Common myeloid progenitor, CD34-positive (primary cell): ENCODE measurements at regions of chr14 and their contacts with region 1.

Region 1: GRCh38 chr14:96309896-96310330 is 53.2 kb downstream of the ATG2B start:
- DNase-seq: peak; percentile 5 to 17 (median 9)
- H3K4me3 ChIP-seq: no peak overlapping the region
- H3K27ac ChIP-seq: no peak overlapping the region
- H3K4me1 ChIP-seq: no peaks in the 10 kb centered on the region
- H3K27me3 ChIP-seq: no peaks in the 10 kb centered on the region

Region 2: DNA sequence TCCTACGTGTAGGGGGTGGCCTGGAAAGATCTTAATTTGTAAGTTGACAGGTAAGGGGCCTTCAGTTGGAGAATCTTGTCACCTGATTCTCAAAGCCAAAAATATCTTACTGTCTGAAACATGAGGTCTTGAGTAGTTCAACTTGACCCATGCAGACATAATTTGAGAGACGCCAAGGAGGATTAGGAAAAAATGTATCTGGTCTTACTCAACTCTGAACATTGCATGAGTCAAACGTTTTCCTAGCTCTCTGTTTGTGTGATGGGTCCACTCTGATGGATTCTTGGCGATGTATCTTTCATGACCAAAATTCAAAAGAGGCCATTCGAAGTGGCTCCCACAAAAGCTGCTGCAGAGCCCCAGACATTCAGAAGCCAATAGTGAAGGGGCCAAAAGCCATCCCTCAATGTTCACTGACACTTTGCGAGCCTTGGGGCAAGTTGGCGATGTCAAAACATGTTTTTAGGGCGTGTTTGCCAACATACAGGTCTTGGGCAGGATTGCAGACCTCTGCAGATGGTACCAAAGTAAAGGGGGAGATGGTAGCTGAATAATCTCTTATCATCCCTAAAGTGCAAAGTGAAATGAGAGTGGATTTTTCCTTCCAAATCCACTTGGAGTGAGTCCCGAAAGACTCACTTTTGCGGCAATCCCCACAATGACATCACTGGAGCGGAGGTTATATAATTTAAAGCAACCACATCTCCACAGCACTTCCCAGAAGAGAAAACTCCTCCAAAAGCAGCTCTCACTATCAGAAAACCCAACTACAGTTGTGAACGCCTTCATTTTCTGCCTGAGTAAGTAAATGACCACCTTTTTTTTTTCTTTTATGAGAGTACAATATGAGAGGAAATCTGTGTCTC is 54.2 kb before region 1 on chr14 and contains the start of gene BDKRB1:
- CTCF ChIA-PET with region 1: no interaction called
- POLR2A ChIA-PET with region 1: no interaction called
- DNase-seq: no peak
- H3K4me3 ChIP-seq: no peak within 1 kb of the TSS
- H3K27ac ChIP-seq: no peak within 1 kb of the TSS
- H3K4me1 ChIP-seq: no peaks in the 10 kb centered on the region
- H3K27me3 ChIP-seq: peaks cover 0 to 41% (median 16%) of the 10 kb centered on the region in 5 experiments

Region 3: GRCh38 chr14:96267336-96268315 is 42.3 kb before region 1 on chr14:
- CTCF ChIA-PET with region 1: no interaction called
- POLR2A ChIA-PET with region 1: no interaction called
- DNase-seq: peak in 2 of 3 donors; percentile 15 to 17
- H3K4me3 ChIP-seq: no peak overlapping the region
- H3K27ac ChIP-seq: no peak overlapping the region
- H3K4me1 ChIP-seq: no peaks in the 10 kb centered on the region
- H3K27me3 ChIP-seq: peaks cover 0 to 3% (median 0%) of the 10 kb centered on the region in 5 experiments

Region 4: GRCh38 chr14:96297000-96297399 is 12.9 kb before region 1 on chr14:
- CTCF ChIA-PET with region 1: interaction called, 25 read pairs
- POLR2A ChIA-PET with region 1: interaction called, 3 read pairs
- DNase-seq: peak; percentile 26 to 51 (median 44)
- H3K4me3 ChIP-seq: no peak overlapping the region
- H3K27ac ChIP-seq: no peak overlapping the region
- H3K4me1 ChIP-seq: no peaks in the 10 kb centered on the region
- H3K27me3 ChIP-seq: no peaks in the 10 kb centered on the region

Region 5: DNA sequence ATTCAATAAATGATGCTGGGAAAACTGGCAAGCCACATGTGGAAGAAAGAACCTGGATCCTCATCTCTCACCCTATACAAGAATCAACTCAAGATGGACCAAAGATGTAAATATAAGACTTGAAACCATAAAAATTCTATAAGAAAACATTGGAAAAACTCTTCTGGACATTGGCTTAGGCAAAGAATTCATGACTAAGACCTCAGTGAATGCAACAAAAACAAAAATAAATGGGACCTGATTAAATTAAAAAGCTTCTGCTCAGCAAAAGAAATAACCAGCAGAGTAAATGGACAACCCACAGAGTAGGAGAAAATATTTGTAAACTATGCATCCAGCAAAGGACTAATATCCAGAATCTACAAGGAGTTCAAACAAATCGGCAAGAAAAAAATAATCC is 28.6 kb after region 1 on chr14:
- CTCF ChIA-PET with region 1: no interaction called
- POLR2A ChIA-PET with region 1: no interaction called
- DNase-seq: no peak
- H3K4me3 ChIP-seq: no peak overlapping the region
- H3K27ac ChIP-seq: no peak overlapping the region
- H3K4me1 ChIP-seq: no peaks in the 10 kb centered on the region
- H3K27me3 ChIP-seq: no peaks in the 10 kb centered on the region

Region 6: GRCh38 chr14:96349286-96350075 is 39.6 kb after region 1 on chr14:
- CTCF ChIA-PET with region 1: no interaction called
- POLR2A ChIA-PET with region 1: no interaction called
- DNase-seq: peak; percentile 47 to 71 (median 55)
- H3K4me3 ChIP-seq: peak overlapping the region in 1 of 7 experiments; percentile 24
- H3K27ac ChIP-seq: peak overlapping the region in 1 of 2 experiments; percentile 2
- H3K4me1 ChIP-seq: peaks cover 0 to 12% (median 5%) of the 10 kb centered on the region in 4 experiments
- H3K27me3 ChIP-seq: no peaks in the 10 kb centered on the region